Activated CD8-positive, alpha-beta memory T cell treated with anti-CD3 and anti-CD28 coated beads, Interleukin-2, amount 10 ng/mL, durations not matched to agents 7 days and 5 days (primary cell): ENCODE measurements at regions of chr17 and their contacts with region 1.

Region 1: GRCh38 chr17:7136266-7136877 is 21.8 kb upstream of the ASGR2 start:
- DNase-seq: peak; percentile 82
- ATAC-seq: peak; percentile 40
- H3K4me3 Mint-ChIP-seq: no peak overlapping the region
- H3K27ac Mint-ChIP-seq: no peak overlapping the region
- H3K4me1 Mint-ChIP-seq: peaks cover 21% of the 10 kb centered on the region
- H3K27me3 Mint-ChIP-seq: peaks cover 13% of the 10 kb centered on the region

Region 2: GRCh38 chr17:7056386-7056785 is 80.0 kb before region 1 on chr17:
- CTCF ChIA-PET with region 1: interaction called, 65 read pairs
- DNase-seq: no peak
- ATAC-seq: no peak
- H3K4me3 Mint-ChIP-seq: no peak overlapping the region
- H3K27ac Mint-ChIP-seq: no peak overlapping the region
- H3K4me1 Mint-ChIP-seq: no peaks in the 10 kb centered on the region
- H3K27me3 Mint-ChIP-seq: peaks cover 4% of the 10 kb centered on the region

Region 3: DNA sequence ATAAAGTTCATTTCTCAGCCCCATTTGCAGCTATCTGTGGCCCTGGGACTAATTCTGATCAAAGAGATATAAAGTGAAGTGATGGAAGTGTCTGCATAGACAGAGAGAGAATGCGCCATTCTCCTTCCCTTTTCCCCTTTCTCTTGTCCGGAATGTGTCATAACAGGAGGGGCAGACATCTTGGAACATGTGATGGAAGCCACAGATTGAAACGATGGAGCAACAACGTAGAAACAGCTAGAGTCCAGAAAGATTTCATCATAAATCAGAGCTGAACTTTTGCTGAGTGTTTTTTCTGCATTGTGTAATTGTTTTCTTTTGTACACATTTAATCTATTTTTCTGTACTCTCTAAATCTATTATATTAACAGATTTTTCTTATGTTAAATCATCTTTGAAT is 31.5 kb after region 1 on chr17:
- CTCF ChIA-PET with region 1: interaction called, 10 read pairs
- DNase-seq: no peak
- ATAC-seq: no peak
- H3K4me3 Mint-ChIP-seq: no peak overlapping the region
- H3K27ac Mint-ChIP-seq: no peak overlapping the region
- H3K4me1 Mint-ChIP-seq: peaks cover 1% of the 10 kb centered on the region
- H3K27me3 Mint-ChIP-seq: peaks cover 2% of the 10 kb centered on the region

Region 4: DNA sequence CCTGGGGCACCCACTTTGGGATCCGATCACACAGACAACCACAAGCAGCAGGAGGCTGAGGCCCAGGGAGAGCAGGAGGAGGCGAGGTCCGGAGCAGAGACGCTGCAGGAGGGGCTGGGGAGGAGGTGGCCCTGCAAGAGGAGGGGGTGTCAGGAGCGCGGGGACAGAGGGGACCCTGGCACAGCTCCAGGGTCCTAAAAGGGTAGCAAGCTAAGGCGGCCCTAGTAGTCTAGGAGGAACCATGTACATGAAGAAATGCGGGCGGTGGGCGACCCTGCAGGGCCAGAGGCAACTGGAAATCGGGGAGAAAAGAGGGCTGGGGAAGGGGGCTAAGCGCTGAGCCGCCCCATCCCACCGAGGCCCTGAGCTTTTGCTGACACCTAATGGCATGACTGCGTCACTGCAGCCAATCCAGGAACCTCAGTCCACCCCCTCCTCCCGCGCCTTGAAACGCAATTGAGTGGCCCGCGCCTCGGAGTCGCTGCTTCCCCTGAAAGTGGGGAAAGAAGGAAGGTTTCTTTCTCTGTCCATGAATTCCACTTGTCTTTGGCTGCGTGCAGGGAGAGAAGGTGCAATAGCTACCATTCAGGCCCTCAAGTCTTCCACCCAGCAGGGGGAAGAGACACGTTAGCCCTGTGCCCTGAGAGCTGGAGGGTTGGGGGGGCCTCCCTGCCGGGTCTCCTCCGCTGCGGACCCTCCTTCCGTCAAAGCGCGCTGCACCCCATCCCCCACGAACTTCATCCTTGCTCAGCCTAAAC is 41.0 kb after region 1 on chr17:
- CTCF ChIA-PET with region 1: interaction called, 23 read pairs
- DNase-seq: peak; percentile 75
- ATAC-seq: peak; percentile 73
- H3K4me3 Mint-ChIP-seq: peak overlapping the region; percentile 53
- H3K27ac Mint-ChIP-seq: no peak overlapping the region
- H3K4me1 Mint-ChIP-seq: peaks cover 9% of the 10 kb centered on the region
- H3K27me3 Mint-ChIP-seq: peaks cover 14% of the 10 kb centered on the region